Endothelial cell of umbilical vein (primary cell): ENCODE measurements at regions of chr4 and their contacts with region 1.

Region 1: GRCh38 chr4:141346144-141346543 is 125.4 kb downstream of the ZNF330 start:
- DNase-seq: peak; percentile 73
- H3K4me3 ChIP-seq: no peak overlapping the region
- H3K27ac ChIP-seq: no peak overlapping the region
- H3K4me1 ChIP-seq: peaks cover 25% of the 10 kb centered on the region
- H3K27me3 ChIP-seq: no peaks in the 10 kb centered on the region
- CTCF ChIP-seq: peak; percentile 24 to 31
- POLR2A ChIP-seq: no peak

Region 2: DNA sequence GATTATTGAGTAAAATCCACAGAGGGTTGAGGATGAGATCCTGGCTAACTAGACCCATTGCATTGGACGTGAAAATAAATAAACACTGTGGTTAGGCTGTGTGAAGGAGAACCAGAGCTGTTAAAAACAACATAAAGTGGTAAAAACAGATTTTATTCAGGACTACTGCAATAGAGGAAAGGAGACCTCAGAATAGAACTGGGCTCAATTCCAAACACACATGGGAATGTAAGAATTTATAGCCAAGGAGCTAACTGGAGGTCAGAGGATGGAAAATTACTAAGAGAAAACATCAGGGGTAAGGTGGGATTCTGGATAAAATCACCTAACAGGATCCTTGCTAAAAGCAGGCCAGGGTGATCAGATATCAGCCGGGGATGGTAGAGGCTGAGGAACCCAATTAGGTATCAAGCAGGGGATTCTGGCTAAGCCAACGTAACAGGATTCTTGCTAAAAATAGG is 325.3 kb before region 1 on chr4:
- CTCF ChIA-PET with region 1: no interaction called
- POLR2A ChIA-PET with region 1: no interaction called
- dilution Hi-C with region 1: no loop called
- intact Hi-C with region 1: no loop called
- DNase-seq: peak; percentile 2
- H3K4me3 ChIP-seq: no peak overlapping the region
- H3K27ac ChIP-seq: no peak overlapping the region
- H3K4me1 ChIP-seq: no peaks in the 10 kb centered on the region
- H3K27me3 ChIP-seq: no peaks in the 10 kb centered on the region
- CTCF ChIP-seq: no peak
- POLR2A ChIP-seq: no peak

Region 3: GRCh38 chr4:141375855-141376254 is 29.7 kb after region 1 on chr4:
- CTCF ChIA-PET with region 1: interaction called, 12 read pairs
- POLR2A ChIA-PET with region 1: no interaction called
- dilution Hi-C with region 1: no loop called
- intact Hi-C with region 1: no loop called
- DNase-seq: peak; percentile 65
- H3K4me3 ChIP-seq: no peak overlapping the region
- H3K27ac ChIP-seq: no peak overlapping the region
- H3K4me1 ChIP-seq: no peaks in the 10 kb centered on the region
- H3K27me3 ChIP-seq: no peaks in the 10 kb centered on the region
- CTCF ChIP-seq: peak in 1 of 2 donors; percentile 32
- POLR2A ChIP-seq: no peak

Region 4: GRCh38 chr4:141432000-141432712 is 86.0 kb after region 1 on chr4:
- CTCF ChIA-PET with region 1: no interaction called
- POLR2A ChIA-PET with region 1: no interaction called
- dilution Hi-C with region 1: no loop called
- intact Hi-C with region 1: no loop called
- DNase-seq: no peak
- H3K4me3 ChIP-seq: no peak overlapping the region
- H3K27ac ChIP-seq: no peak overlapping the region
- H3K4me1 ChIP-seq: no peaks in the 10 kb centered on the region
- H3K27me3 ChIP-seq: no peaks in the 10 kb centered on the region
- CTCF ChIP-seq: no peak
- POLR2A ChIP-seq: no peak

Region 5: GRCh38 chr4:141458501-141458900 is 112.4 kb after region 1 on chr4:
- CTCF ChIA-PET with region 1: no interaction called
- POLR2A ChIA-PET with region 1: no interaction called
- dilution Hi-C with region 1: no loop called
- intact Hi-C with region 1: no loop called
- DNase-seq: peak; percentile 8
- H3K4me3 ChIP-seq: no peak overlapping the region
- H3K27ac ChIP-seq: no peak overlapping the region
- H3K4me1 ChIP-seq: no peaks in the 10 kb centered on the region
- H3K27me3 ChIP-seq: peaks cover 0 to 2% of the 10 kb centered on the region in 2 experiments
- CTCF ChIP-seq: no peak
- POLR2A ChIP-seq: no peak

Region 6: DNA sequence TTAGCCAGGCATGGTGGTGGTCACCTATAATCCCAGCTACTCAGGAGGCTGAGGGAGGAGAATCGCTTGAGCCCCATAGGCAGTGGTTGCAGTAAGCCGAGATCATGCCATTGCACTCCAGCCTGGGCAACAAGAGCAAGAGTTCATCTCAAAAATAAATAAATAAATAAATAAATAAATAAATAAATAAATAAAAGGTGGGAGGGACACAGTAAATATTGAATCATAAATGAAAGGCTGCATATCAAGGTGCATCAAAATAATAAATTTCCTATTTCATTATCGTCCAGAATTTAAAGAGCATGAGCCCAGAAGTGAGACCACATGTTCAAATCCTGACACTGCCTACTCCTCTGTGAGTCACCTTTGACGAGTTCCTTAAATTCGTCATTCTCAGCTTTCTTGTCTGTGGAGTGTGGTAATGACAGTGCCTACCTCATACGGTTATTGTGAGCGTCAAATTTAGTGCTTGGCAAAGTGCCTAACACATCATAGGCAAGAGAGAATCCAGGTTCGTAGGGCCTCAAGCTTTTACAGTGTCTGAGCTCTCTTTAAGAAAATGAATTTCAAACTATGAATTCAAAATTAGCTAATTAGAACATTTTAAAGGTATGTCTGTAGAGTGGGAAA is 340.1 kb after region 1 on chr4:
- CTCF ChIA-PET with region 1: interaction called, 4 read pairs
- POLR2A ChIA-PET with region 1: no interaction called
- dilution Hi-C with region 1: no loop called
- intact Hi-C with region 1: loop called (anchors 5 kb)
- DNase-seq: peak; percentile 70
- H3K4me3 ChIP-seq: no peak overlapping the region
- H3K27ac ChIP-seq: peak overlapping the region; percentile 57
- H3K4me1 ChIP-seq: peaks cover 23% of the 10 kb centered on the region
- H3K27me3 ChIP-seq: no peaks in the 10 kb centered on the region
- CTCF ChIP-seq: no peak
- POLR2A ChIP-seq: no peak

Region 7: DNA sequence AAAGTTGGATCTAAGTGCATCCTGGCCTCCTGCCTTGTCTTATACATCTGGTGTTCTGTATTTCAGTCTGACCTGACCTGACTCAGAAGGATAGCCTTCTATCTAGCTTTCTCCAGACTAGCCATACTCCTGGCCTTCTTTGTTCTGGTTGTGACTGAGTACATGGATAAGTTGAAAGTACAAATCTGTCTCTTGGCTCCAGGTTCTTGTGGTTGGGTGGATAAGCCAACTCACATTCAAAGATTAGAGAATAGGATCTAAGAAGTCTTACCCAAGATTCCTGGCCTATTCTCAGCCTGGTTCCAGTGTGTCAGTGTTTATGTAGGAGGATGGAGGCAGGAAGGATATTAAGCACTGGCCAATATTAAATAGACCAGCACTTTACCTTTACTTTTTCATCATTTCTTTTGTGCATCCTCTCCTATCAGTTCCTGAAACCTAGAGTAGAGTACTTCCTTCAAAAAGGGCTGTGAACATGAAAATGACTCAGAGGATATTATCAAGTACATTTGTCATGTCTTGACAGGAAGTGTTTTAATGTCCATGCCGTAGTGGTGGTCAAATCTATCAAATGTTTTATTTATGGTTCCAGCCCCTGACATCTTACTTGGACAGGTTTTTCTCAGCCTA is 413.8 kb after region 1 on chr4:
- CTCF ChIA-PET with region 1: interaction called, 10 read pairs
- POLR2A ChIA-PET with region 1: no interaction called
- dilution Hi-C with region 1: no loop called
- intact Hi-C with region 1: loop called (anchors 2 kb)
- DNase-seq: peak; percentile 67
- H3K4me3 ChIP-seq: no peak overlapping the region
- H3K27ac ChIP-seq: peak overlapping the region; percentile 81
- H3K4me1 ChIP-seq: peaks cover 36% of the 10 kb centered on the region
- H3K27me3 ChIP-seq: no peaks in the 10 kb centered on the region
- CTCF ChIP-seq: no peak
- POLR2A ChIP-seq: no peak

Region 8: DNA sequence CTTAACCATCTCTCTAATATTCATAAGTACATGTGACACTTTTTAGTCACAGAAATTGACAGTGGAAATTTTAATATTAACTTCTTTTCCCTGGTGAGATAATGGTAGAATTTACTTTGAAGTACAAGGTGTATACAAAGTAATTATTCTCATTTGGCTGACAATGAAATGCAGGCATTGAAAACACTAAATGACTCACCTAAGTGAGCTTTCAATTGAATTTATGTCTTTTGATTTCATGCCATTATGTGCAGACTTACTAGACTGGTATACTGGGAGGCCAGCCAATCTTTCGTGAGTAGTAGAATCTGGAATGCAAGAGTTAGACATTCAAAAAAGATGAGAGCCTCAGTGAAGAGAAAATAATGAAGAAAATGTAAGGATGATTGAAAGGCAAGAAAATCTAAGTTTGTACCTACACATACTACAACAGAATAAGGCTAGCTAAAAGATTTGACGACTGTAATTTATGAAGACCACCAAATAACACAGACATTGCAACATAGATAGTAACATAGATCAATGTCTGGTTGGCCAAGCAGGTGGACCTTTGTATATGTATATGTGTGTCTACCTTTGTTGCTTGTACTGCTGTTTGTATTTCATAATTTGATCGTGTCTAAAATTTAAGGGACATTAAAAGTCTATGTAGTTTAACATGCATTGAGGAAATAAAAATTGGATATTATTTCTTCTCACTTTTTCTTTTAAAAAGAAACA is 749.9 kb after region 1 on chr4:
- CTCF ChIA-PET with region 1: interaction called, 5 read pairs
- POLR2A ChIA-PET with region 1: no interaction called
- dilution Hi-C with region 1: no loop called
- intact Hi-C with region 1: loop called (anchors 5 kb)
- DNase-seq: peak; percentile 94
- H3K4me3 ChIP-seq: no peak overlapping the region
- H3K27ac ChIP-seq: peak overlapping the region; percentile 68
- H3K4me1 ChIP-seq: peaks cover 28% of the 10 kb centered on the region
- H3K27me3 ChIP-seq: no peaks in the 10 kb centered on the region
- CTCF ChIP-seq: no peak
- POLR2A ChIP-seq: no peak

Region 9: DNA sequence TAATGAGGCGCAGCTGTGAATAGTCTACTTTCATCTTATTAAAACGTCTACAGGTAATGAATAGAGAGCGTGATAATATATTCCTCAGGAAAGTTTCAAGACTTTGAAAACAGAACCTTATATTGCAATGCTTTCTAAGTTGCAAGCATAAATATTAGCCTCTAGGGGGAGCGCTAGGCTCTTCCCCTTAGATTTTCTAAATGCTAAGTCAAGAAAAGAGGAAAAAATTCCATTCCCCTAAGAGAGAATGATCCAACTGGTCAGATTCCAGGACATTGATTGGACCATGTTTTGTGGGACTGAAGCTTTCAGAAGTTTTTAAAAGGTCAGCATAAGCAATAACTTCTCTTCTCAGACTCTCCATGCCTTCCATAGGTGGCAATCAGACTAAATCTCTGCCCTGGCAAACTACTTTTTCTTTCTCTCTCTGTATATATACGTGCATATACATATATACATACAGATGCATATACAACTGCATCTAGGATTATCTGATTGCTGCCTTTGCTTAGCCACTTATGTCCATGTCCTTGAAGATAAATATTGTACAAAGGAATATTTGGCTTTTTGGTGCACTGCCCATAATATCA is 1007.1 kb after region 1 on chr4:
- CTCF ChIA-PET with region 1: interaction called, 16 read pairs
- POLR2A ChIA-PET with region 1: no interaction called
- dilution Hi-C with region 1: no loop called
- intact Hi-C with region 1: loop called (anchors 2 kb)
- DNase-seq: peak; percentile 68
- H3K4me3 ChIP-seq: no peak overlapping the region
- H3K27ac ChIP-seq: no peak overlapping the region
- H3K4me1 ChIP-seq: peaks cover 21% of the 10 kb centered on the region
- H3K27me3 ChIP-seq: no peaks in the 10 kb centered on the region
- CTCF ChIP-seq: peak; percentile 60 to 66
- POLR2A ChIP-seq: no peak

Region 10: GRCh38 chr4:142443469-142443868 is 1097.3 kb after region 1 on chr4:
- CTCF ChIA-PET with region 1: no interaction called
- POLR2A ChIA-PET with region 1: no interaction called
- dilution Hi-C with region 1: no loop called
- intact Hi-C with region 1: no loop called
- DNase-seq: no peak
- H3K4me3 ChIP-seq: no peak overlapping the region
- H3K27ac ChIP-seq: no peak overlapping the region
- H3K4me1 ChIP-seq: no peaks in the 10 kb centered on the region
- H3K27me3 ChIP-seq: no peaks in the 10 kb centered on the region
- CTCF ChIP-seq: no peak
- POLR2A ChIP-seq: no peak

Region 11: DNA sequence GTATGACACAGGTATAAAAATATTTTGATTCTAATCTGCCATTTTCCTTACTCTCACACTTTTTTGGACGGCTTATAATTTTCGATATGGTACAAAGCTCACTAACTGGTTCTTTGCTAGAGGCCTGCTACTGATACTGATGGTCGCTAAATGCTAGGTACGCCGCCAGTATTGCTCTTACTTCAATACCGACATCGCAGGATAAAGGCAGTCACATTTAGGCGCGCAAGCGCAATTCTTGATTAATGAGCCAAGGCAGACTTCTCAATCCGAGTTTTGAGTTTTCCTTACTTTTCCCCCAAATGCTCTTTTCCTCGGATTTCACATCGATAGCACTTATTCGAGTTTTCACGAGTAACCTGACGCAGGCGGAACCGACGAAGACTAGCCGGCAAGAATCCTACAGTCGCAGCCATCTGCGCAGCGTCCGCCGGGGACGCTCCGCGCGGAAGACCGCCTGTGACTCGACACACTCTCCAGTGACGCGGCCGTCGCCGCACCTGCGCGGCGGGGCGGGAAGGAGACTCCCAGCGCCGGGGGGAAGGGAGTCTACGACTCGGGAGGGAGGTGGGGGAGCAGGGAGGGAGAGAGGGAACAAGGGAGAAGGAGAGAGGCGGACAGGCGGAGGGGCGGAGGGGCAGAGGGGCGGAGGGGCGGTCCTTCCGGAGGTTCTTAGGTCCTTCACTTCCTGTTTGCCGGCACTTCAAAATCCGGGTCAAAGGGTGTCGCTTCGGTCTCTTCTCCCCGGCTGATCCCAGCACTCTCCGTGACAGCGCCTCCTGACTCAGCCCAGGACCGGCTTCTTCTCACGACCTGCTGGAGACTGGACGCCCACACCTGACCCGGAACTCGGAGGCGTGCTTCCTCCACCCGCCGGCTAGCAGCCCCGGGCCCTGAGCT is 1838.3 kb after region 1 on chr4 and contains the start of gene USP38:
- CTCF ChIA-PET with region 1: no interaction called
- POLR2A ChIA-PET with region 1: no interaction called
- dilution Hi-C with region 1: no loop called
- intact Hi-C with region 1: loop called (anchors 10 kb)
- DNase-seq: peak; percentile 90
- H3K4me3 ChIP-seq: peak within 1 kb of the TSS; percentile 64 to 84 (median 69)
- H3K27ac ChIP-seq: peak within 1 kb of the TSS; percentile 73
- H3K4me1 ChIP-seq: peaks cover 30% of the 10 kb centered on the region
- H3K27me3 ChIP-seq: no peaks in the 10 kb centered on the region
- CTCF ChIP-seq: no peak
- POLR2A ChIP-seq: peak; percentile 49
- total RNA-seq, gene USP38: 17.0 and 18.1 TPM in 2 replicates